H1 (cell line): ENCODE measurements at regions of chr15 and their contacts with region 1.

Region 1: GRCh38 chr15:89472785-89473256 is 23.6 kb downstream of the RHCG start:
- DNase-seq: peak; percentile 79 to 95
- H3K4me3 ChIP-seq: no peak overlapping the region
- H3K27ac ChIP-seq: no peak overlapping the region
- H3K4me1 ChIP-seq: peaks cover 5 to 15% (median 11%) of the 10 kb centered on the region in 4 experiments
- H3K27me3 ChIP-seq: no peaks in the 10 kb centered on the region; a peak in 3 of 7 replicates
- CTCF ChIP-seq: peak; percentile 98 to 100 (median 99)
- EP300 ChIP-seq: no peak
- POLR2A ChIP-seq: no peak
- RAD21 ChIP-seq: peak; percentile 98 to 100

Region 2: DNA sequence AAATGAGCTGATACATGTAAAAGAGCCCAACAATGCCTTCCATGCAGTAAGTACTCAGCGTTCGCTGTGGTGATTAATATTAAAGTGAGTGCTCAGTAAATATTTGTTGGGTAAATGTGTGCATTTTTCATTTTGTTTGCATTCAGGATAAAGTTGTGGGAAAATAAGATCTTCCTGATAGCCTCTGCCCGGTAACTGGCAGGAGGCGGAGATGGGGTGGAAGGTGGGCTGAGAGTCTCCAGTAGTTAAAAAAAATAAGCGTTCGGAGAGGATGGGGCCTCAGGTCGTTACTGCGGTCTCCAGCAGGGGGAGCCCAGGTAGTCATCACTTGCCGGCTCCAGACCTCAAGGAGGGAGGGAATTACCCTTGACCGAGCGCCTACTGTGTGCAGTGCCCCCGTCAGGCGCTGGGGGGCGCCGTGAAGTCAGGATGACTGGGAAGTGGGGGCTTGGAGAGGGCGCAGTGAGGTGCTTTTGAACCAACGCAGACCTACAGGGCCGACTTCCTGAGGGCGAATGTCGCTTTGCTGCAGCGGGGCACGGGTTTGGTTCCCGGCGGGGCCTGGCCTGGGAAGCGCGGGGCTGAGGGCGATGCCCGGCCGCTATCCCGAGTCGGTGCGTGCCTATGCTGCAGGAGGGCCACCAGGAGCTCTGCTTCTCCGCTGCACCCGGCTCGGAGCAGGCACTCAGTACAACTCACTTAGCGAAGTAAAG is 56.5 kb before region 1 on chr15:
- CTCF ChIA-PET with region 1: interaction called, 207 read pairs
- POLR2A ChIA-PET with region 1: interaction called, 4 read pairs
- DNase-seq: peak; percentile 95 to 100
- H3K4me3 ChIP-seq: peak overlapping the region; percentile 34 to 64 (median 56)
- H3K27ac ChIP-seq: no peak overlapping the region
- H3K4me1 ChIP-seq: peaks cover 9 to 26% (median 14%) of the 10 kb centered on the region in 4 experiments
- H3K27me3 ChIP-seq: peaks cover 32 to 90% (median 77%) of the 10 kb centered on the region in 4 experiments
- CTCF ChIP-seq: peak; percentile 89 to 100 (median 99)
- EP300 ChIP-seq: no peak
- POLR2A ChIP-seq: no peak
- RAD21 ChIP-seq: peak; percentile 67 to 74

Region 3: GRCh38 chr15:89442671-89443307 is 30.0 kb before region 1 on chr15:
- CTCF ChIA-PET with region 1: interaction called, 518 read pairs
- POLR2A ChIA-PET with region 1: interaction called, 5 read pairs
- DNase-seq: peak; percentile 53 to 98
- H3K4me3 ChIP-seq: no peak overlapping the region
- H3K27ac ChIP-seq: no peak overlapping the region
- H3K4me1 ChIP-seq: peaks cover 2 to 18% (median 13%) of the 10 kb centered on the region in 4 experiments
- H3K27me3 ChIP-seq: peaks cover 0 to 2% (median 0%) of the 10 kb centered on the region in 4 experiments; a peak in 3 of 7 replicates
- CTCF ChIP-seq: peak; percentile 77 to 90 (median 80)
- EP300 ChIP-seq: no peak
- POLR2A ChIP-seq: no peak
- RAD21 ChIP-seq: peak; percentile 84 to 91

Region 4: GRCh38 chr15:89457097-89457496 is 15.7 kb before region 1 on chr15:
- CTCF ChIA-PET with region 1: interaction called, 43 read pairs
- POLR2A ChIA-PET with region 1: interaction called, 7 read pairs
- DNase-seq: no peak
- H3K4me3 ChIP-seq: no peak overlapping the region
- H3K27ac ChIP-seq: no peak overlapping the region
- H3K4me1 ChIP-seq: peaks cover 4 to 14% (median 9%) of the 10 kb centered on the region in 4 experiments
- H3K27me3 ChIP-seq: peaks cover 0 to 29% (median 23%) of the 10 kb centered on the region in 4 experiments; a peak in 4 of 7 replicates
- CTCF ChIP-seq: no peak
- EP300 ChIP-seq: no peak
- POLR2A ChIP-seq: no peak
- RAD21 ChIP-seq: no peak